Naive thymus-derived CD4-positive, alpha-beta T cell (primary cell): ENCODE measurements at regions of chr6 and their contacts with region 1.

Region 1: GRCh38 chr6:13336553-13336952 is 8.2 kb upstream of the TBC1D7 start:
- DNase-seq: peak; percentile 39 to 80 (median 60)
- ATAC-seq: peak; percentile 83
- H3K4me3 ChIP-seq: no peak overlapping the region
- H3K4me3 Mint-ChIP-seq: peak overlapping the region in 1 of 10 donors; percentile 14
- H3K27ac ChIP-seq: no peak overlapping the region
- H3K27ac Mint-ChIP-seq: no peak overlapping the region
- H3K4me1 ChIP-seq: no peaks in the 10 kb centered on the region
- H3K4me1 Mint-ChIP-seq: peaks cover 3 to 42% (median 8%) of the 10 kb centered on the region in 7 donors
- H3K27me3 ChIP-seq: no peaks in the 10 kb centered on the region
- H3K27me3 Mint-ChIP-seq: peaks cover 0 to 2% (median 0%) of the 10 kb centered on the region in 5 donors

Region 2: GRCh38 chr6:13099771-13100170 is 236.8 kb before region 1 on chr6:
- CTCF ChIA-PET with region 1: no interaction called
- POLR2A ChIA-PET with region 1: no interaction called
- intact Hi-C with region 1: no loop called
- DNase-seq: no peak
- ATAC-seq: no peak
- H3K4me3 ChIP-seq: no peak overlapping the region
- H3K4me3 Mint-ChIP-seq: no peak overlapping the region
- H3K27ac ChIP-seq: no peak overlapping the region
- H3K27ac Mint-ChIP-seq: no peak overlapping the region
- H3K4me1 ChIP-seq: no peaks in the 10 kb centered on the region
- H3K4me1 Mint-ChIP-seq: no peaks in the 10 kb centered on the region
- H3K27me3 ChIP-seq: no peaks in the 10 kb centered on the region
- H3K27me3 Mint-ChIP-seq: peaks cover 8 to 24% (median 10%) of the 10 kb centered on the region in 5 donors

Region 3: GRCh38 chr6:13146442-13146841 is 190.1 kb before region 1 on chr6:
- CTCF ChIA-PET with region 1: no interaction called
- POLR2A ChIA-PET with region 1: no interaction called
- intact Hi-C with region 1: no loop called
- DNase-seq: no peak
- ATAC-seq: no peak
- H3K4me3 ChIP-seq: no peak overlapping the region
- H3K4me3 Mint-ChIP-seq: no peak overlapping the region
- H3K27ac ChIP-seq: no peak overlapping the region
- H3K27ac Mint-ChIP-seq: no peak overlapping the region
- H3K4me1 ChIP-seq: no peaks in the 10 kb centered on the region
- H3K4me1 Mint-ChIP-seq: peaks cover 0 to 4% (median 0%) of the 10 kb centered on the region in 7 donors
- H3K27me3 ChIP-seq: no peaks in the 10 kb centered on the region
- H3K27me3 Mint-ChIP-seq: peaks cover 4 to 14% (median 8%) of the 10 kb centered on the region in 5 donors

Region 4: GRCh38 chr6:13355043-13355951 is 18.7 kb after region 1 on chr6:
- CTCF ChIA-PET with region 1: interaction called, 7 read pairs
- POLR2A ChIA-PET with region 1: no interaction called
- intact Hi-C with region 1: loop called (anchors 1 kb)
- DNase-seq: peak in 8 of 9 donors; percentile 10 to 42 (median 30)
- ATAC-seq: peak; percentile 75
- H3K4me3 ChIP-seq: peak overlapping the region; percentile 22
- H3K4me3 Mint-ChIP-seq: peak overlapping the region; percentile 78 to 91 (median 80)
- H3K27ac ChIP-seq: peak overlapping the region; percentile 46
- H3K27ac Mint-ChIP-seq: peak overlapping the region; percentile 71 to 98 (median 85)
- H3K4me1 ChIP-seq: peaks cover 27 to 32% of the 10 kb centered on the region in 2 donors
- H3K4me1 Mint-ChIP-seq: peaks cover 33 to 56% (median 46%) of the 10 kb centered on the region in 7 donors
- H3K27me3 ChIP-seq: no peaks in the 10 kb centered on the region
- H3K27me3 Mint-ChIP-seq: no peaks in the 10 kb centered on the region

Region 5: DNA sequence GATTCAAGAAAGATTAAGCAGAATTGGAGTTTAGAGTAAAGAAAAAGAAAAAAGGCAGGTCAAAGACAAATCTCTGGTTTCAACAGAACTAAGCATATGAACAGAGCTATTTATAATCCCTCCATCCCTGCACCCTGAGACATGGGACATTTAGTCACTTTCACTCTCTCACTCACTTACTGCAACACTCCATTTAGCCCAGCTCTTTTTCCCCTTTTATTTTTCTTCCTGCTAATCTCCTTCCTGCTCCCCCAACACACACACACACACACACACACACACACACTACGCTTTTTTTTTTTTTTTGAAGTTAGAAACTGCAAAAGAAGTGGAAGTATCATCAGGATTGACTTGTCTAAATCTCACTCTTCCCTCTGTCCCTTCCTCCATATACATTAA is 36.9 kb after region 1 on chr6:
- CTCF ChIA-PET with region 1: interaction called, 3 read pairs
- POLR2A ChIA-PET with region 1: no interaction called
- intact Hi-C with region 1: loop called in 1 of 2 experiments (anchors 5 kb)
- DNase-seq: no peak
- ATAC-seq: no peak
- H3K4me3 ChIP-seq: no peak overlapping the region
- H3K4me3 Mint-ChIP-seq: no peak overlapping the region
- H3K27ac ChIP-seq: no peak overlapping the region
- H3K27ac Mint-ChIP-seq: no peak overlapping the region
- H3K4me1 ChIP-seq: peaks cover 0 to 9% of the 10 kb centered on the region in 2 donors
- H3K4me1 Mint-ChIP-seq: peaks cover 0 to 24% (median 2%) of the 10 kb centered on the region in 7 donors
- H3K27me3 ChIP-seq: no peaks in the 10 kb centered on the region
- H3K27me3 Mint-ChIP-seq: no peaks in the 10 kb centered on the region

Region 6: GRCh38 chr6:13383328-13384163 is 47.0 kb after region 1 on chr6:
- CTCF ChIA-PET with region 1: no interaction called
- POLR2A ChIA-PET with region 1: no interaction called
- intact Hi-C with region 1: loop called in 1 of 2 experiments (anchors 2 kb)
- DNase-seq: no peak
- ATAC-seq: peak; percentile 93
- H3K4me3 ChIP-seq: no peak overlapping the region
- H3K4me3 Mint-ChIP-seq: peak overlapping the region in 1 of 10 donors; percentile 23
- H3K27ac ChIP-seq: no peak overlapping the region
- H3K27ac Mint-ChIP-seq: peak overlapping the region in 2 of 9 donors; percentile 31 to 58
- H3K4me1 ChIP-seq: peaks cover 0 to 8% of the 10 kb centered on the region in 2 donors
- H3K4me1 Mint-ChIP-seq: peaks cover 0 to 30% (median 0%) of the 10 kb centered on the region in 7 donors
- H3K27me3 ChIP-seq: no peaks in the 10 kb centered on the region
- H3K27me3 Mint-ChIP-seq: no peaks in the 10 kb centered on the region

Region 7: GRCh38 chr6:13500264-13500663 is 163.7 kb after region 1 on chr6:
- CTCF ChIA-PET with region 1: no interaction called
- POLR2A ChIA-PET with region 1: no interaction called
- intact Hi-C with region 1: no loop called
- DNase-seq: no peak
- ATAC-seq: peak; percentile 38
- H3K4me3 ChIP-seq: no peak overlapping the region
- H3K4me3 Mint-ChIP-seq: no peak overlapping the region
- H3K27ac ChIP-seq: no peak overlapping the region
- H3K27ac Mint-ChIP-seq: no peak overlapping the region
- H3K4me1 ChIP-seq: no peaks in the 10 kb centered on the region
- H3K4me1 Mint-ChIP-seq: peaks cover 0 to 2% (median 0%) of the 10 kb centered on the region in 7 donors
- H3K27me3 ChIP-seq: no peaks in the 10 kb centered on the region
- H3K27me3 Mint-ChIP-seq: peaks cover 0 to under 1% (median 0%) of the 10 kb centered on the region in 5 donors

Region 8: GRCh38 chr6:13538084-13538483 is 201.5 kb after region 1 on chr6:
- CTCF ChIA-PET with region 1: interaction called, 21 read pairs
- POLR2A ChIA-PET with region 1: interaction called, 4 read pairs
- intact Hi-C with region 1: loop called (anchors 1 kb)
- DNase-seq: peak in 5 of 9 donors; percentile 18 to 38 (median 25)
- ATAC-seq: no peak
- H3K4me3 ChIP-seq: no peak overlapping the region
- H3K4me3 Mint-ChIP-seq: no peak overlapping the region
- H3K27ac ChIP-seq: no peak overlapping the region
- H3K27ac Mint-ChIP-seq: no peak overlapping the region
- H3K4me1 ChIP-seq: no peaks in the 10 kb centered on the region
- H3K4me1 Mint-ChIP-seq: peaks cover 0 to 3% (median 0%) of the 10 kb centered on the region in 7 donors
- H3K27me3 ChIP-seq: no peaks in the 10 kb centered on the region
- H3K27me3 Mint-ChIP-seq: no peaks in the 10 kb centered on the region